PC-9 (cell line): ENCODE measurements at regions of chr7 and their contacts with region 1.

Region 1: DNA sequence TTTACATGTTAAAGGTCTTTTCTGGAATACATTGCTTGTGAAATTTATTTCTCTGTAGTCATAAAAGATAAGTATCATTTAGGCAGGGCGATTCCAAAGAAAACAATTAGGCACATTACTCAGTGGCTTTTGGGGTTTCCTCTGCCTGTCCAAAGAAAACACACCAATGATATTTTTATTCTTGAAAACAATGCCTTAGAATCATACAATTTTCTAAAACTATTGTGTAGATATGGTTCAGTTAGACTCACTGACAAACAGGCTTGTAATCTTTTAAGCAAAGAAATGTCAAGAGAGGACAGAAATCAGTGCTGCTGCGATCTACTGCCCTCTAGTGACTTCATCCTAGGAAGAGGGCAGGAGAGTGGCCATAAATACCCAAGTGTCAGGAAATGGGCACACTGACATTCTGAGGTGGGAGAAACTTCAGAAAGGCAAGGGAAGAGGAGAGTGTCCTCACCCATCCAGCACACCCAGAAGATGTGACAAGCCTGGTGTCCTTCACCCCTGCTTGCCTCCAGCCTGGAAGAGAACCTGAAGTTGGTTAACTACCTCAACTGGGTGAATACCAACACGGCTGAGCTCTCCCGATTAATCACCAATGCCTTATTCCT is 120.5 kb downstream of the GALNT11 start:
- DNase-seq: peak; percentile 41 to 50
- H3K4me3 ChIP-seq: no peak overlapping the region
- H3K27ac ChIP-seq: no peak overlapping the region
- H3K4me1 ChIP-seq: no peaks in the 10 kb centered on the region
- H3K27me3 ChIP-seq: no peaks in the 10 kb centered on the region
- CTCF ChIP-seq: peak; percentile 77

Region 2: DNA sequence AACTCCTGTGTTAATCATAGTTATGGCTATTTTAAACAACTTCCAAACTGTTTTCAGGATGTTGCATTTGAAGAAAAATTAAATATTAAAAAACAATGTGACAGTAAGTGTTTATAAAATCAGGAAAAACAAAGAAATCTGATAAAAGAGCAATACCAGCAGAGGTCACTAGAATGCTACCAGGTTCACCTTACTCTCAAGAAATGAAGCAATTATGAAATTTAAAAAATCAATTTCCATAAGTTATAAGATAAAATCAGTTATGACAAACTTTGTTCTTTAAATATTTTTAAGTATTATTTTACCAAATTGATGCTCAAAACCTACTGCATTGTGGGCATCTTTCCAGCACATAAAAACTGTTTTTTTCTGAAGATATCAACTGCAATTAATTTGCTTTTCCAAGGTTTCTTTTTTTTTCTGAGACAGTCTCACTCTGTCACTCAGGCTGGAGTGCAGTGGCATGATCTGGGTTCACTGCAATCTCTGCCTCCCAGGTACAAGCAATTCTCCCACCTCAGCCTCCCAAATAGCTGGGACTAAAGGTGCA is 575.5 kb before region 1 on chr7:
- CTCF ChIA-PET with region 1: no interaction called
- POLR2A ChIA-PET with region 1: no interaction called
- intact Hi-C with region 1: loop called (anchors 10 kb)
- DNase-seq: no peak
- H3K4me3 ChIP-seq: no peak overlapping the region
- H3K27ac ChIP-seq: no peak overlapping the region
- H3K4me1 ChIP-seq: no peaks in the 10 kb centered on the region
- H3K27me3 ChIP-seq: no peaks in the 10 kb centered on the region
- CTCF ChIP-seq: peak; percentile 86